Prostate gland (tissue), 2 donors: ENCODE measurements at regions of chr9 and their contacts with region 1.

Region 1: GRCh38 chr9:134325817-134326723 is at the start of gene RXRA:
- DNase-seq: peak; percentile 86
- H3K4me3 ChIP-seq: peak within 1 kb of the TSS; percentile 56 to 81
- H3K27ac ChIP-seq: peak within 1 kb of the TSS; percentile 97 to 98
- H3K4me1 ChIP-seq: peaks cover 25% of the 10 kb centered on the region
- H3K27me3 ChIP-seq: no peaks in the 10 kb centered on the region
- CTCF ChIP-seq: peak in 3 of 4 experiments; percentile 21 to 34 (median 31)
- POLR2A ChIP-seq: peak; percentile 88
- total RNA-seq, gene RXRA: 69.5 to 84.1 TPM

Region 2: DNA sequence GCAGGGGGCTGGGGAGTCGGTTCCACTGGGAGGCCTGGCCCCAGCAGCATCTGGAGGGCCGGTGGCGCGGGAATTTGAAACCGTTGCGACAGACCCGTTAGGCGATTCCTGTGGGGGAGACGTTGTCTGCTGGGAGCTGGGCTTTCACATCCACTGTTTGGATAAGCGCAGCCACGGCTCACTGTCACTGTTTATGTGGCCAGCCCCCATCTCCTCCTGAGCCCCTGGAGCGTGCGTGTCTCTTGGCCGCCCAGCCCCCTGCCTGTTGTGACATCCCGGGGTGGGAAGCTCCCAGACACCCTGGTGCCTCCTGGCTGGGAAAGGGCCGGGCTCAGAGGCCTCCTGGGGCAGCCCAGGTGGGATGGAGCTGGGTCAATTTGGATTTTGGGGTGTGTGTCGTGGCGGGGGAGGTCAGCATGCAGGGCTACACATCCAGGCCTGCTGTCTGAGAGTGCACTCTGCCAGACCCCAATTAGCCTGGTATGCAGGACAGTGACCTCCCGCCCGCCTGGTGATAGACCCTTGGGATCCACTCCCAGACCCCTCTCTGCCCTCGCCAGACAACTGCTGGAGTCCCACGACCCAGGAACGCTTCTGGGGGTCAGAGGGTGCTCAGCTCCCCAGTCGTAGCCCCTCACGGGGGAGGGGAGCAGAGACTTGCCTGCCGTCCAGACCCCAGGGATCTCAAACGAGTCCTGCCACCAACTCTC is 99.7 kb before region 1 on chr9:
- intact Hi-C with region 1: loop called (anchors 5 kb)
- DNase-seq: no peak
- H3K4me3 ChIP-seq: no peak overlapping the region
- H3K27ac ChIP-seq: no peak overlapping the region
- H3K4me1 ChIP-seq: peaks cover 18% of the 10 kb centered on the region
- H3K27me3 ChIP-seq: no peaks in the 10 kb centered on the region
- CTCF ChIP-seq: no peak
- POLR2A ChIP-seq: no peak

Region 3: DNA sequence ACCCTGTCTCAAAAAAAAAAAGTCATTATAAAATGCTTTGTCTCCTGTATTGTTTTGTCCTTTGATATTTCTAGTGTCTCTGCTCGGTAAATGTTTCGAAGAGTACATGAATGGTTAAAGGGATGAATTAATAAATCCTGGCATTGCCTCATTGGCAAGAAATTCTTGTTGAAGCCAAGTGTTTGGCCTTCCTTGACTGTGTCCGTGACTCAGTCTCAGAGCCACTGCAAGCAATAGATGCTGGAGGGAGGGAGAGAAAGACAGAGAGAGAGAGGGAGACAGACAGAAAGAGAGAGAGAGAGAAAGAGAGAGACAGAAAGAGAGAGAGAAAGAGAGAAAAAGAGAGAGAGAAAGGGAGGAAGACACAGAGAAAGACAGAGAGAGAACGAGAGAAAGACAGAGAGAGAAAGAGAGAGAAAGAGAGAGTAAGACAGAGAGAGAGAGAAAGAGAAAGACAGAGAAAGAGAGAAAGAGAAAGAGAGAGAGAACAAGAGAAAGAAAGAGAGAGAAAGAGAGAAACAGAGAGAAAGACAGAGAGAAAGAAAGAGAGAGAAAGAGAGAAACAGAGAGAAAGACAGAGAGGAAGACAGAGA is 72.4 kb before region 1 on chr9:
- intact Hi-C with region 1: no loop called
- DNase-seq: no peak
- H3K4me3 ChIP-seq: no peak overlapping the region
- H3K27ac ChIP-seq: no peak overlapping the region
- H3K4me1 ChIP-seq: no peaks in the 10 kb centered on the region
- H3K27me3 ChIP-seq: no peaks in the 10 kb centered on the region
- CTCF ChIP-seq: no peak
- POLR2A ChIP-seq: no peak

Region 4: DNA sequence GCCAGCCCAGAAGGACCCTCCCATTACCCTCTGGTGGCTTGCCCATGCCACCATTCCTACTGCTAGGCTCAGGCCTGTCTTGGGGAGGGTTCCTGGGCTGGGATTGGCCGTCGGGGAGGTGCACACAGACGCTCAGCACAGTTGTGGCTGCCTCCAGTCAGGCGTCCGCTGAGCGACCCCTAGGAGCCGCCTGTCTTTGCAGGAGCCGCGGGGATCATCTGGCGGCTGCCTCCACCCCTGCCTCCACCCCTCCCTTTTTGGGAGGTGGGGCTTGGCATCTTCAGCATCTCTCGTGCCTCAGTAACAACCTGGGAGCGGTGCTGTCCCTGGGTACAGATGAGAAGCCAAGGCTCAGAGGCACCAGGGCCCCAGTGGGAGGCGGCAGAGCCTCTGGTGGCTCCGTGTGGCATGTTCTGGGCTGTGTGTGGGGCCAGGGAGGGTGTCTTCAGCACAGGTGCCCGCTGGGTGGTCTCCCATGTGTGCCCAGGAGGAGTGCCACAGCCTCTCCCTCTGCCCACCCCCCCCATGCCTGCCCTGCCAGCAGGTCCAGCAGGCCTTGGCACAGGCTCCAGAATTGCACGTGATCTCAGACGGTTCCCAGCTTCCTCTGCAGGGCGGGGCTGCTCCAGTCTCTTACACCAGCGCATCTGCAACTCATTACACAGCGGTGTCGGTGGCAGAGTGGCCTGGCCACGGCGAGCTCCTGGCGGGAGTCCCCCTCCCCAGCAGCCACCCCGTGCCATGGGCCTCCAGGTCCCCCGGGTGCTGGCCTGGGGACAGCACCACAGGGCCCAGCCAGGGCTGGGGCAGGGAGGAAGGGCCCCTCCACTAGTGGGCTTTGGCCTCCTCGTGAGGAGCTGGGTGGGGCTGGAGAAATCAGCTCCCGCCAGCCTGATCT is 40.0 kb after region 1 on chr9:
- intact Hi-C with region 1: loop called (anchors 5 kb)
- DNase-seq: peak; percentile 96
- H3K4me3 ChIP-seq: no peak overlapping the region
- H3K27ac ChIP-seq: peak overlapping the region; percentile 90 to 91
- H3K4me1 ChIP-seq: peaks cover 70% of the 10 kb centered on the region
- H3K27me3 ChIP-seq: no peaks in the 10 kb centered on the region
- CTCF ChIP-seq: peak in 2 of 4 experiments; percentile 25 to 33
- POLR2A ChIP-seq: peak; percentile 63

Region 5: GRCh38 chr9:134443168-134444037 is 117.3 kb after region 1 on chr9:
- intact Hi-C with region 1: loop called (anchors 2 kb)
- DNase-seq: peak; percentile 90
- H3K4me3 ChIP-seq: no peak overlapping the region
- H3K27ac ChIP-seq: no peak overlapping the region
- H3K4me1 ChIP-seq: peaks cover 7% of the 10 kb centered on the region
- H3K27me3 ChIP-seq: no peaks in the 10 kb centered on the region
- CTCF ChIP-seq: peak; percentile 92 to 100 (median 98)
- POLR2A ChIP-seq: no peak